ENCODE measurements at regions of chr15 and their contacts with region 1.

Region 1: DNA sequence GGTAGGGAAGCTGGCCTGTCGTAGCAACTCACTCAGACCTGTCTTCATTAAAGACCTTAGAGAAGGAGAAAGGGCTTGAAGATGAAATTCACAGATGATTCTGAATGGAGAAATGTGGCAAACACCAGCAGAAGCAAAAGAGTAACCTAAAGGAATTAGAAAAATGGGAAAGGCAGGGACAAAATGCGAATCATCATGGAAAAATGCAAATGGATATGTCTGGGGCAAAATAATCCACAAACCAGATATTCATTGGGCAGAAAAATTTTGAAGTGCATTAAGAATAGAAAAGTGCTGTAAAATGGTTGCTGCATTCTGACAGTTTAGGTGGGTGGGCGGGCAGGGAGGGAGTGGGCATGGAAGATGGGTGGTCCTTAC is 156.9 kb upstream of the RASGRP1 start:
- DNase-seq: no peak
- CTCF ChIP-seq: no peak

Region 2: DNA sequence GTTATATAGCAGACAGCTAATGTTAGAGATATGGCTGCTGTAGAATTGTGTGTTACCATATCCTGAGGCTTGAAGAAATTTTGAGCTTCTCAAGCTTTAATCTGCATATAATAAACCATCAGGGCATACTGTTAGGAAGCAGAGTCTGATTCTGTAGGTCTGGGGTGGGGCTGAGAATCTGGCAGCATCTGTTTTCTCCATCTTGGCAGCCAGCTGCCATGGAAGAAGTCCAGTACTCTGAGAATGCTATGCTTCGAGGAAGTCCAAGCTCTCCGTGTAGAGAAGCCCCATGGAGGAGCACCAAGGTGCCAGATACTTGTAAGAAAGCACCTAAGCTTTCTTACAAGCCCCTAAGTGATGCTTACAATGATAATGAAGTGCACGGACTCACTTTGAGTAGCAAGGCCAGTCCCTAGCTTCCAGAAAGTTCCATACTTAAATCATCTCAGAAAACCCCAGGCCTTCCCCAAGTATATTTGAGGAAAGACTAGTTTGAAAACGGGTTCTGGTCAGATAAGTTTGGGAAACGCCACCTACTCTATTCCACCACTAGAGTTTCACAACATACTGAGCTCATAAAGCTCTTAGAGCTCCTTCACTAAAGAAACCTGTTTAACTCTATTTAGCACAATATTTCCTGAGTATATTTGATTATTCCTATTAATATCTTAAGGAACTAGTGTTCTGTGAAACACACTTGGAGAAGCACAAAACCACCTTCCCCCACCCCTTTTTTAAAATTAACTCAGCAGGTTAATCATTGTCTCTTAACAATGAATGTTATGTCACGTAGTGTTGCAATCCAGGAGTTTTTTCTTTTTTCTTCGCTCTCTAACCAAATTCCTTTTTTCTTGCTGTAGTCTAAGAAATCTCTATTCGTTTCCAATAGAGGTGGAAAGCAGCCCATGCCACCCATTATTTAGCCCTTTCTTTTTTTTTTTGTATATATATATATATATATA is 97.0 kb before region 1 on chr15:
- CTCF ChIA-PET with region 1: no interaction called
- POLR2A ChIA-PET with region 1: no interaction called
- DNase-seq: no peak
- CTCF ChIP-seq: no peak

Region 3: DNA sequence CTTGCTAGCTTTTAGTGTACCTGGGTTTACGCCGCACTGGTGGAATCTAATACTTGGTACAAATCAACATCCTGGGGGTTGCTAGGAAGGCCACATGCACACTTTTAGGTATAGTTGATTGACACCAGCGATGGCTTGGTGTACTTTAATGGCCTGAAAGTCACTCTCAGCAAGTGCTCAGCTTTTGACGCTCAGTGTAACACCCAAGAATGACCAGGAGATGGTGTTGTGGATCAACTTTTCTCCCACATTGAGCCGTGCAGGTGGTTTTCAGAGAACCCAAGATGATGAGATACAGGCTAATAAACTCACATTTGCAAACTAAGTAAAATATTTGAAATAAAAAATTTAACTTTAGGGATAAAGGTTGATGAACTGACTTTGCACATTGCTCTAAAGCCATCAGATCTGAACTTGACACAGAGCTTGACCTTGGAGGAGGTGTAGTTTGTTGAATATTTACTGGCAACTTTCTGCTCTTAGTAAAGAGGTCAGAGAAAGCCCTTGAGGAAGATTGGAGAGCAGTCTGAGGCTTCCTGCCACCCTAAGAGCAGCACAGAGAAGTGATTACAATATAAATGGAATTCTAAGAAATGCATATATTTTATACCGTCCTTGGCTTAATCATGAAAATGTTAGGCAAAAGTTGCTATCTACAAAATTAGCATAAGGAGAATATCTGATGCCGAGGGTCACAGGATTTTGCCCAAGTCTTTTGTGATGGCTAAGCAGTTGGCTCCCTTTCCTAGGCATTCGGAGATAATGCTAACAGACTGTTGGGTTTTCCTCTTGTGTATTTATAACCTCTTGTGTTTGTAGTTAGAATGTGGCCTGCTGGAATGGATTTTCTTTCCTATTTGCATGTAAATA is 13.5 kb before region 1 on chr15:
- CTCF ChIA-PET with region 1: interaction called, 16 read pairs
- POLR2A ChIA-PET with region 1: no interaction called
- DNase-seq: peak; percentile 52
- CTCF ChIP-seq: peak; percentile 61

Region 4: DNA sequence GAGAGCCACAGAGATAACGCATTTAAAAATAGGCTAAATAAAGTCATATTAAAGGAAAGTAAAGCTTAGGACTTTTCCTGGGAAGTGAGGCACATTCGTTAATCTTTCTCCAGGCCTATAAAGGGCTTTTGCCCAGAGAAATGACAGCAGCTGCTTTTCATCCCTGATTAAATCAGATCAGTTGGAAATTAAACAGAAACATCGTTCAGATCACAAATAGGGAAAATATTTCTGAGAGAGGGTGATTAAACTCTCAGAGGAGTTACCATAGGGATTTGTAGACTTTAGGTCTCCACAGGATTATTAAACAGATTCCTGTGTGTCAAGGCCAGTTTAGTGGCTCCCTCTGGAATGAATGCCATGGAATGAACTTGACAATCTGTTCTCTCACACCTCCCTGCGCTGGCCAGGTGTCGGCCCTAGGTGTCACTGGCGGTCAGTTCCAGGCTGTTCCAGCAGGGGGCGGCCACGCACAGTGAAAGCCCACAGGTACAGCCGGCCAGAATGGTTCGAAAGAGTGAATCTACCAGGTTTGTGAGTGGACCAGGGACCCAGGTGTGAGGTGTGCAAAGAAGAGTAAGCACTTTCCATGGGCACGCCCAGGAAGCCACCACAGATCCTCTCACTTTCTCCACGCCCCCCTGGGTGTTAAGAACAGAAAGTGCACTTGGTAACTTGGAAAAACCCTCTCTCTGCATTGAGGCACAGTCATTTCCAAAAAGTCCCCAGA is 96.0 kb after region 1 on chr15:
- CTCF ChIA-PET with region 1: no interaction called
- POLR2A ChIA-PET with region 1: no interaction called
- DNase-seq: peak; percentile 78
- CTCF ChIP-seq: peak; percentile 99

Measured in GM10248 (cell line).